CD8-positive, alpha-beta T cell (primary cell): ENCODE measurements at regions of chrX and their contacts with region 1.

Region 1: DNA sequence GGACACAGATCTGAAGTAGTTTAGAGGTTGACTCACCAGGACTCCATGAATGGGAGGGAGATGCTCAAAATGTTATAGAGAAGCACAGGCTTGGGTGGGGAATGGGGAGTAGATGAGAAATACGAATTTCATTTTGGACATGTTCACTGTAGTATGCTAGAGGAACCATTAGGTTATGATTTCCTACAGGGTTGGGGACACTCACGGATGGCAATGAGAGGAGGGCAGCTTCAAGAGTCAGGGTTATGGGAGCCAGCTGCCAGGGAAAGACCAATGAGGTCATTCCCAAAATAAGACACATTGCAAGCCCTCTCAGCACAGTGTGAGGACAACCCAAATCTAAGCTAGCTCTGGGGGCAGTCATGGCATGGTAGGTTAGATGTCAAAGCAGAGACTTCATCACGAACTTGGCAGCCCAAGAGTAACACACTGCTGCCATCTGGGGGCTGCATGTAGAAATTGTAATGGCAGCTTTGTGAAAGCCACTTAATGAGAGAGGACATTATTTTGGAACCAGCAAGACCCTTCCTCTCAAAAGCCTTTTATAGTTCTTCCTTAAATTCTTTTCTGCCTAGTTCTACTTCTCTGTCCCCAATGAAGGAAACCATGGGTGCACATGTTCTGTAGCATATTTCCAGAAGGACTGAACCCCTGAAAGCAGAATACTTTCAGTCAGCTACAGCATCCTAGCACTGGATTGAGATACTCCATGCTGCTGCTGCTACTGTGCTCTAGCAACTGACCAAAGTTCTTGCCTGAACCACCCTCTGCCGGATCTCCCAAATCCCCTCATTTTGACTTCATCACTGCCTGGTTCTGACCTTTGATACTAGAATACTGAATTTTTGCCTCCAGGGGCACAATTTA is 16.2 kb upstream of the ZCCHC12 start:
- DNase-seq: peak in 5 of 9 experiments; percentile 10 to 56 (median 20)
- ATAC-seq: peak; percentile 51
- H3K4me3 ChIP-seq: no peak overlapping the region
- H3K4me3 Mint-ChIP-seq: no peak overlapping the region
- H3K27ac ChIP-seq: no peak overlapping the region
- H3K27ac Mint-ChIP-seq: no peak overlapping the region
- H3K4me1 ChIP-seq: no peaks in the 10 kb centered on the region
- H3K4me1 Mint-ChIP-seq: no peaks in the 10 kb centered on the region
- H3K27me3 ChIP-seq: no peaks in the 10 kb centered on the region
- H3K27me3 Mint-ChIP-seq: peaks cover 8% of the 10 kb centered on the region
- CTCF ChIP-seq: peak; percentile 25

Region 2: DNA sequence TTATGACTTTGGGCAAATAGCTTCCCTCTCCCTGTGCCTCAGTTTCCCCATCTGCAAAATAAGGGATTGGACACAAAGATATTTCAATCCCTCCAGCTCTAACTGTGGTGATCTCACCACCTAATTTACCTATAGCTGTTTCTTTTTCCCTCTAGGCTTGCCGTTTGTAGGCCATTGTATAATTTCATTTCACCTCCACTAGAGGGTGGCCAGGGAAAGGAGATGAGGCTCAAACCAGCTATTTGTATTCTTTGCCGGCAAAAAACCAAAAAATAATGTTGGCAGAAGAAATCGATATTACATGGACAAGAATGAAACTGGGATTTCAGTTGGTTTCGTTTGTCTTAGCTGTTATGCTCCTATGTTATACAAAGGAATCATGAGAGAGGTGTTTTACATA is 347.9 kb before region 1 on chrX:
- CTCF ChIA-PET with region 1: no interaction called
- POLR2A ChIA-PET with region 1: no interaction called
- intact Hi-C with region 1: loop called (anchors 5 kb)
- DNase-seq: peak in 4 of 9 experiments; percentile 18 to 65 (median 37)
- ATAC-seq: peak; percentile 72
- H3K4me3 ChIP-seq: no peak overlapping the region
- H3K4me3 Mint-ChIP-seq: no peak overlapping the region
- H3K27ac ChIP-seq: no peak overlapping the region
- H3K27ac Mint-ChIP-seq: no peak overlapping the region
- H3K4me1 ChIP-seq: no peaks in the 10 kb centered on the region
- H3K4me1 Mint-ChIP-seq: peaks cover 4% of the 10 kb centered on the region
- H3K27me3 ChIP-seq: no peaks in the 10 kb centered on the region
- H3K27me3 Mint-ChIP-seq: no peaks in the 10 kb centered on the region
- CTCF ChIP-seq: peak; percentile 45